ENCODE measurements at regions of chr10 and their contacts with region 1.

Region 1: GRCh38 chr10:92142949-92143348 is 147.9 kb downstream of the CPEB3 start:
- DNase-seq: peak; percentile 60
- H3K4me3 ChIP-seq: peak overlapping the region; percentile 59
- H3K27ac ChIP-seq: peak overlapping the region; percentile 78
- H3K4me1 ChIP-seq: peaks cover 61% of the 10 kb centered on the region
- CTCF ChIP-seq: no peak

Region 2: DNA sequence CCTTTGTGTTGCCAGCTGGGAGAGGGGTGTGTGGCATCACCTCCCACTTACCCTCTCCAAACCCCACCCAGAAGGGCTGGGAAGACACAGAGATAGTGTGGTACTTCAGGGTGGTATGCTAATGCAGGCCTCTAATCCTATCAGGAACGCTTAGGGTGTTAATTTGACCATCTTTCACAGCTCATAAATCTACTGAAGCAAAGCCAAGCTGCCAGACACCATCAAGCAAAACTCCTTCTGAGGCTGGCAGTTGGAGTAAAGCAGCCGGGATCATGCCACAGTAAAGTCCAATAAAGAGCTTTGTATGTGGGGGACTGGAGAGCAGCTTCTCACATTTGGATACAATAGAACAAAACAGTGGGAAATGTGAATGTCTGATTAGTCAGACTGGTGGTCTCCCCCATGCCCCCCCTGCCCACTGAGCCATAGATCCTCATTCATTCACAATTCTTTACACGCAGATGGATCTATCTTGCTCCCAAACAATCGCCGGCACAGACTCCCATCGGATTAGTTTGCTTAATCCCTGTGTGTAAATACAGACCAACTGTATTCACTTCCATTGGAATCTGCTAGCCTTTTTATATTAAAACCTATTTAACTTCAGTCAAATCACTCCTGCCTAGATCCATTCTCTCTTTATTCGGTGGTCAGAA is 263.3 kb before region 1 on chr10:
- CTCF ChIA-PET with region 1: no interaction called
- POLR2A ChIA-PET with region 1: no interaction called
- intact Hi-C with region 1: no loop called
- DNase-seq: no peak
- H3K4me3 ChIP-seq: no peak overlapping the region
- H3K27ac ChIP-seq: no peak overlapping the region
- H3K4me1 ChIP-seq: no peaks in the 10 kb centered on the region
- CTCF ChIP-seq: no peak

Region 3: GRCh38 chr10:92074126-92074887 is 68.6 kb before region 1 on chr10:
- CTCF ChIA-PET with region 1: no interaction called
- POLR2A ChIA-PET with region 1: no interaction called
- intact Hi-C with region 1: no loop called
- DNase-seq: peak; percentile 44
- H3K4me3 ChIP-seq: no peak overlapping the region
- H3K27ac ChIP-seq: no peak overlapping the region
- H3K4me1 ChIP-seq: no peaks in the 10 kb centered on the region
- CTCF ChIP-seq: peak; percentile 74

Region 4: DNA sequence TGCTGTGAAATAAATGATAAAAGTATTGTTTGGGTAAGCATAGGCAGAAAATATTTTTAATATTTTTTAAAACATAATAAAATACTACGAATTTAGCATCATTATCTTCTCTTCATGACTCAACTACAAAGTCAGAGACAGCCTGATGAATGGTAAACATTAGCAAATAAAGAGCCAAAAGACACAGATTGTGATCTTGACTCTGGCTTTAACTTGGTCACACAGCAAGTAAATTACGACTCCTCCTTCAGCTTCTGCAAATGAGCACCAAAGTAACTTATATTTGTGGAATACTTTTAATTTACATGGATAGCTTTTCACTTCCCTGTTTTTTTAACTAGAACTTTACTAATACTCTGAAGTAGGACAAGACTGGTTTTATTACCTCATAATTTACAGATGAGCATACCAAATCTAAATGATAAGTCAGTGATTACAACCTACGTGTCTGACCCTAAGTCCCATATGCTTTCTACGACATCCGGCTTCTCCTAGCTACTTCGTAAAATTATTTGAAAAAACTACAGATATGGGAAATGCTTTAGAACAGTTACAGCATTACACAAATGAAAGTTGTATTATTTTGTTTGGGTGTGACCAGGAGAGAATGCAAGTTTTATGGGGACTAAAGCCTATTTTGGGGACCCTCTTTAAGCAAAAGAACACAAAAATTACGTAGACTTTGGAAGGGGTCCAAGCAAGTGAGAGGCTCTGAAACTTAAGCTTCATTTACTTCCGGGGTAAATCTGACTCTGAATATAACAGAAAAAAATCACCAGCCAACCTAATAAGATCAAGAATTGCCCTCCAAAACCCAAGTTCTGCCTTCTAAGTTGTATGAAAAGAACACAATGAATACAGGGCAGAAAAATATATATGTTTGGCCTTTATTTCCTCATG is 14.2 kb after region 1 on chr10:
- CTCF ChIA-PET with region 1: no interaction called
- POLR2A ChIA-PET with region 1: interaction called, 12 read pairs
- intact Hi-C with region 1: no loop called
- DNase-seq: no peak
- H3K4me3 ChIP-seq: no peak overlapping the region
- H3K27ac ChIP-seq: no peak overlapping the region
- H3K4me1 ChIP-seq: no peaks in the 10 kb centered on the region
- CTCF ChIP-seq: no peak

Region 5: DNA sequence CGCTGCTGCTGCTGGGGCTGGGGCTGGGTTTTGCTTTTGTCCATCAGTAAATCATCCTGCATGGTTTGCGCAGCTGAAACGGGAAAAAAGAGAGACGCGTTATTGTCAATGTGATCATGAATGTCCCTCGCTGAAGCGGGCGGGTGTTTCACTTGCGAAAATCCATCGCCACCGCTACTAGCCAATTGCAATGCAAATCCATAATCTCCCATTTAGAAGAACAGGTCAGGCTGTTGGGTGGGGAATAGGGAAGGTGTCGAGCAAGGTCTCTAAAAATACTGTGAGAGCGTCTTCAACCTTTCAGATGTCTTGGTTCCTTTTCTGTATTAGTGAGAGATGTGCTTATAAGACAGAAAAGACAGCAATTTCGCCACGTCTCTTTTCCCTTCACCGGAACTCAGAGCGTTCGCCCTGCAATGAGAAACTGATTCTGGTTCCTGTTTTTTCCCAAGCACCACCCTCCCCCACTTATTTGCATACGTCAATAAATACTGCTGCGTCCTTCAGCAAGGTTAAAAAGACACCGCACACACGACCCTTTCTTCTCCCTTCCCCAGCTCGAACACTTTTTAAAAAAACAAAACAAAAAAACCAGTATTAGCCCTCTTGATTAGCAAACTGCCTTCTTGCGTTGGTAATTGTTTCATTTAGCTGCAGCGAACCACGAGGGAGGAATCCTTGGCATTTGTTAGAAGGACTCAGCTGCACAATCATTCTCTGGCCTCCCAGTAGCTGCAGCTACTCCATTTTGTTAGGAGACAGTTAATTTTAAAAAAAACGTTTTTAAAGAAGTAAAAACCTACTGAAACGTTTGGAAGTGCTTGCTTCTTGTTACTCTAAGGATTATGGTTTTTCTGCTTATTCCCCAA is 97.6 kb after region 1 on chr10:
- CTCF ChIA-PET with region 1: no interaction called
- POLR2A ChIA-PET with region 1: interaction called, 3 read pairs
- intact Hi-C with region 1: loop called (anchors 2 kb)
- DNase-seq: peak; percentile 79
- H3K4me3 ChIP-seq: peak overlapping the region; percentile 75
- H3K27ac ChIP-seq: peak overlapping the region; percentile 16
- H3K4me1 ChIP-seq: peaks cover 43% of the 10 kb centered on the region
- CTCF ChIP-seq: no peak